Activated naive CD8-positive, alpha-beta T cell treated with anti-CD3 and anti-CD28 coated beads, Interleukin-2, amount 10 ng/mL, durations not matched to agents 7 days and 5 days (primary cell): ENCODE measurements at regions of chr9 and their contacts with region 1.

Region 1: DNA sequence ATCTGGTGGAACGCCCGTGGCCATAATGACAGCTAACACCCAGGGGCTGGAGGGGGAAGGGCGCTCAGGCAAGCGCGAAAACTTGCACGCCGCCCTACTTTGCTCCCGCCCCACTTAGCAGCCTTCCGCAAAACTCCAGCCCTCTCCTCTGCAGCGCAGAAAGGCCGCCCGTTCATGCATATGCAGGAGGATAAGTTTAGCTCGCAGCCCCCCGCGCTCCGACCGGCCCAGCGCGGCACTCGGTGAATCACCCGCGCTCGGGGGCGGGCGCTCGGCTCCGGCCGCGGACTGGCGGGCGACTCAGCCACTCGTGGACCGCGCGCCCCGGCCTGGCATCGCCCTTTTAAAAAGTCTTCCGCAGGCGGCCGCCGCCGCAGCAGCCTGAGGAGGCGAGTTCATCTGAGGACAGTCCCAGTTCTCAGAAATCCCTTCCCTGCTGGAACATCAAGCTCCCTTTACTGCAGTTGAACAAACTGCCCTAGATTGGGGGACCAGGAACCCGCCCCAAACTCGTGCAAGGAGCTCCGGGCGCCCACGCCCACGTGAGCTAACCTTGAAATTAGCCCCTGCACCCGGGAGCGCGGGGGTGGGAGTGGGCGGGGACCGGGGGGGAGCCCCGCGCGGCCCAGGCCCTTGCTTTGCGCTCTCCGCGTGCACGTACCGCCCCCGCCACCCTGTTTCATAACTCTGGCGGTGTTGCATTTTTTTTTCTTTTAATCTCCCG is 4.5 kb upstream of the KLF9 start:
- DNase-seq: peak; percentile 93
- ATAC-seq: peak; percentile 44
- H3K4me3 Mint-ChIP-seq: peak overlapping the region; percentile 98
- H3K27ac Mint-ChIP-seq: peak overlapping the region; percentile 99
- H3K4me1 Mint-ChIP-seq: peaks cover 37% of the 10 kb centered on the region
- H3K27me3 Mint-ChIP-seq: no peaks in the 10 kb centered on the region

Region 2: DNA sequence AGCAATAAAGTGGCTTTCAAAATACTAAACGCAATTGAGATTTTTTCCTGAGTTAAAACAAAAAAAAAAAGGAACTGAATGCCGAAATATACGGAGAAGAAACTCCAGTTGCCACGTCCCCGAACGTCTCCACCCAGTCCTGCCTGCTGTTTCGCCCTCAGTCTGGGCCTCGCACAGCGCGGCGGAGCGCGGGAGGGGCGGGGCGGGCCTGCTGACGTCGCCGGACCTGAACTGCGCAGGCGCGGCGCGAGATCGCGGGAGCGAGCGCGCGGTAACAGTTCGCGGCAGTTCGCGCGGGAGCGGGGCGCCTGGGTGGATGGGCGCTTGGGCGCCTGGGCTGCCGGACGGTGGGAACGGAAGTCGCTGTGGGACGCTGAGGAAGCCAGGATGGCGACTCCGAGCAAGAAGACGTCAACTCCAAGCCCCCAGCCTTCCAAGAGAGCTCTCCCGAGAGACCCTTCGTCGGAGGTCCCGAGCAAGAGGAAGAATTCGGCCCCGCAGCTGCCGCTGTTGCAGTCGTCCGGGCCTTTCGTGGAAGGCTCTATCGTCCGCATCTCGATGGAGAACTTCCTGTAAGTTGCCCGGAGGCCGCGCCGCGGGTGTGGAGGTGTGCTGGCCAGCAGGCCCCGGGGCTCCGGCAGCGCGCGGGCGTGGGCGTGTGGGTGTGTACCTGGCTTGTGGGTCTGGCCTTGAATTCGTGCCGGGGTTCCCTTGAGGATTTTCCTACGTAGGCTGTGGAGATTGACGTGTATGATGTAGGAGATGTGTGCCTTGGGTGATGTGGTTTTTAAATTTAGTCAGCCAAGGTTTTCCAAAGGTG is 160.1 kb before region 1 on chr9 and contains the start of gene SMC5:
- POLR2A ChIA-PET with region 1: interaction called, 23 read pairs
- DNase-seq: peak; percentile 96
- ATAC-seq: peak; percentile 92
- H3K4me3 Mint-ChIP-seq: peak within 1 kb of the TSS; percentile 95
- H3K27ac Mint-ChIP-seq: peak within 1 kb of the TSS; percentile 94
- H3K4me1 Mint-ChIP-seq: peaks cover 46% of the 10 kb centered on the region
- H3K27me3 Mint-ChIP-seq: no peaks in the 10 kb centered on the region
- total RNA-seq, gene SMC5: 42.3 to 44.9 TPM

Region 3: DNA sequence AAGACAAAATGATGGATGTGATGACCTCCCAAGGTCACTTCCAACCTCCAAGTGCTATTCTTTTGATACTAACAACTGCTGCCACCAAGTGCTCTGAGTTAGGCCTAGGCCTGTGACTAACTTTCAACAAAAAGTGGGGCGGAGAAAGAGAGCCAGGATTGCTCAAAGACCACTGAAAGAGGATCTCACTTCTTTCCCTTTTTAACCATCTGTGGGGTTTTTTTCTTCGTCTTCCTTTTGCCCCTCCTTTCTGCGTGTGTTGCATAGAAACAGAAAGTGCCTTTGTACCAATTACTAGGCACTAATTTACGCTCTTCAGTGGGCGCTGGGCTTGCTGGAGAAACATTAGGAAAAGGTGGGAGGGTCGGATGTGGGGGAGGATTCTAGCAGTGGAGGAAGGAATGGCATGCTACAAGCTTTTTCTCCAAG is 12.5 kb before region 1 on chr9:
- POLR2A ChIA-PET with region 1: interaction called, 52 read pairs
- DNase-seq: no peak
- ATAC-seq: peak; percentile 68
- H3K4me3 Mint-ChIP-seq: peak overlapping the region; percentile 89
- H3K27ac Mint-ChIP-seq: peak overlapping the region; percentile 96
- H3K4me1 Mint-ChIP-seq: peaks cover 65% of the 10 kb centered on the region
- H3K27me3 Mint-ChIP-seq: no peaks in the 10 kb centered on the region

Region 4: DNA sequence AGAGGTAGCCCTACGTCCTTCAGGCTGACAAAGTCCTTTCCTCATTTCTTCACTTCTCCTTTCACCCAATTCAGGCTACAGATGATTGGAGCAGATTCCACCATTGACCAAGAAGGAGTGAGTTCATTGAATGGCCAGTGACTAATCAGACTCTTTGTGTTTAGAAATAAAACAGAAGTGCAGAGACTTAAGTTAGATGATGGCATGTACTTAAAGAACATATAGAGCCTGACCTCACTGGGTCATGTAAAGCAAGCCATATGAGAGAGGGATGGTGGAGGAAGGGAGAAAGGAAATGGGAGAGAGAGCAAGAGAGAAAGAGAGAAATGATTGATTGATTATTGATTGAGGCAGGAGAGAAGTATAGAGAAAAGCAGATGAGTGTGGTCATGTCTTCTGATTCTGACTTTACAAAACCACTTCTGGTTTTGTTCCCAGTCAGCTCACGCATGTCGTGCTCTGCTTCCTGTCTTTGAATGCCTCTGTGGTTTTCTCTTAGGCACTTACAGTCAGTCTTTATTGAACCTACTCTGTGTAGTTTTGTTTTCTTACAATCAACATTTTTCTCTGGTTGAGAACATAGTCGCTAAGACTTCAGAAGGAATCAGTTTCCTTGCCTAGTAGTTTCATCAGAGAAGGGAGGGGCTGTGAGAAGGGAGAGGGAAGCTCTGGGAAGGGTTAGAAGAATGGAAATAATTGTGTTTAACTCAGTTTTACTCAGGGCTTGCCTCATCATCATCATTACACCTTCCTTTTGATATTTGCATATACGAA is 144.6 kb after region 1 on chr9:
- POLR2A ChIA-PET with region 1: interaction called, 79 read pairs
- DNase-seq: peak; percentile 39
- ATAC-seq: peak; percentile 89
- H3K4me3 Mint-ChIP-seq: peak overlapping the region; percentile 63
- H3K27ac Mint-ChIP-seq: peak overlapping the region; percentile 98
- H3K4me1 Mint-ChIP-seq: peaks cover 48% of the 10 kb centered on the region
- H3K27me3 Mint-ChIP-seq: no peaks in the 10 kb centered on the region

Region 5: GRCh38 chr9:70602321-70603019 is 183.5 kb after region 1 on chr9:
- POLR2A ChIA-PET with region 1: interaction called, 11 read pairs
- DNase-seq: no peak
- ATAC-seq: peak; percentile 56
- H3K4me3 Mint-ChIP-seq: no peak overlapping the region
- H3K27ac Mint-ChIP-seq: peak overlapping the region; percentile 19
- H3K4me1 Mint-ChIP-seq: peaks cover 13% of the 10 kb centered on the region
- H3K27me3 Mint-ChIP-seq: no peaks in the 10 kb centered on the region